GM13977 (cell line): ENCODE measurements at regions of chr13 and their contacts with region 1.

Region 1: GRCh38 chr13:91398413-91399272 is at the start of gene GPC5:
- DNase-seq: peak; percentile 94
- CTCF ChIP-seq: no peak

Region 2: GRCh38 chr13:91031508-91031907 is 367.1 kb before region 1 on chr13:
- in situ Hi-C with region 1: no loop called
- DNase-seq: no peak
- CTCF ChIP-seq: no peak

Region 3: DNA sequence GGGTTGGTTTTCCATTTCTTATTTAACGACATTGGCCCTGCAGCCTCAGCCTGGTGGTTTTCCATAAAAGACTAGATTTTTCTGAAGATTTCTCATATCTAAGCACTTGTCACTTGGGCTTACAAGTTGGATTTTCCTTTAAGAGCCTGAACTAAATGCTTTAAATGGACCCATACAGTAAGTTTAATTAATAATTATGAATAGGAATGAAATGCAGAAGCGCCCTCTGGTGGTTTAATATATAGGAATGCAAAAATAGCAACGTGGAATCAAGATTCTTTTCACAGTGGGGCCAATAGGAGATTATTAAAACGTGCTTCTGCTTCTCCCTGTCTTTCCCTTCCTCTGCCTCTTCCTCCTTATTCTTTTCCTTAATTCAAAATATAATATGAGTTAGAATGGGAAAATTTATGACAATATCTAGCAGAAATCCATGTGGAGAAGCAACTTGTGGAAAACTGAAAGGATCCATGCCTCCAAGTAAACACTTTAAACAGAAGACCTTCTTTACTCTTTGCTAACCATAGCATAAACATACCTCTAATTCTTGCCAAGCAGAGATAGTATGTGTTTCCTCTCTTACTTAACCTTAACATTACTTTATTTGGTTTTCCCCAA is 323.7 kb after region 1 on chr13:
- in situ Hi-C with region 1: loop called (anchors 25 kb)
- DNase-seq: peak; percentile 17
- CTCF ChIP-seq: peak; percentile 47